Activated CD8-positive, alpha-beta memory T cell treated with anti-CD3 and anti-CD28 coated beads, Interleukin-2, amount 10 ng/mL, durations not matched to agents 7 days and 5 days (primary cell): ENCODE measurements at regions of chr5 and their contacts with region 1.

Region 1: DNA sequence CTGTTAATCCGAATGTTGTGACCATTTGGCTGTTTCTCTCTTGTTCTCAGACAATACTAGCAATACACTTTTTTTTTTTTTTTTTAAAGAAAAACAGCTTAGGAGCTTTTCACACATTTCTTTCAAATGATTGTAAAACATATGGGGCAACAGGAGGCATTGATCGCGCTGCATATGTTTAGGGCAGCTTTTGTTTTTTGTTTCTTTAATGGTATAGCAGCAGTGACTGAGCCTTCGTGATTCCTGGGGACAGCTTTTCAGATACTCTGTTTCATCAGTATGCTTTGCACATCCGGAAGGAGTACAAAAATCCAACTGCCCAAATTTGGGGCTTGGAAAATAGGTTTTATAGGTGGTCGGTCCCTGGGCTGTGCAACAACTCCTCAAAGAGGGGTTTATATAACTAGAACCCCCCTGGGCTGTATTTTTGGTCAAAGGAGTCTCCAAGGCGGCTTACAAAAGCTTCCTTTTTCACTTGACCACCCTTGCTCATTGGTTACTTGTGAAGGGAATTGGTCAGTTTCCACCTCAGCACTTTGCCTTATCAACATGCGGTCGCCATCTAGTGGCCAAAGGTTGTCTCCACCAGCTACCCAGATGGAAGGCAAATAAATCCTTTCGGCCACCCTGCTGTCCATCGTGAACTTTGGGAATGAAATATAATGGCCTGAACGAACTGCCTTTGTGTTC is 91.8 kb downstream of the PDE6A start:
- DNase-seq: peak; percentile 58
- ATAC-seq: peak; percentile 61
- H3K4me3 Mint-ChIP-seq: no peak overlapping the region
- H3K27ac Mint-ChIP-seq: no peak overlapping the region
- H3K4me1 Mint-ChIP-seq: no peaks in the 10 kb centered on the region
- H3K27me3 Mint-ChIP-seq: no peaks in the 10 kb centered on the region

Region 2: GRCh38 chr5:149636851-149637246 is 215.9 kb before region 1 on chr5:
- CTCF ChIA-PET with region 1: interaction called, 13 read pairs
- DNase-seq: peak; percentile 73
- ATAC-seq: peak; percentile 66
- H3K4me3 Mint-ChIP-seq: no peak overlapping the region
- H3K27ac Mint-ChIP-seq: no peak overlapping the region
- H3K4me1 Mint-ChIP-seq: peaks cover 13% of the 10 kb centered on the region
- H3K27me3 Mint-ChIP-seq: no peaks in the 10 kb centered on the region

Region 3: GRCh38 chr5:149828161-149828884 is 24.5 kb before region 1 on chr5:
- CTCF ChIA-PET with region 1: interaction called, 159 read pairs
- DNase-seq: peak; percentile 87
- ATAC-seq: peak; percentile 80
- H3K4me3 Mint-ChIP-seq: no peak overlapping the region
- H3K27ac Mint-ChIP-seq: no peak overlapping the region
- H3K4me1 Mint-ChIP-seq: peaks cover 8% of the 10 kb centered on the region
- H3K27me3 Mint-ChIP-seq: no peaks in the 10 kb centered on the region

Region 4: DNA sequence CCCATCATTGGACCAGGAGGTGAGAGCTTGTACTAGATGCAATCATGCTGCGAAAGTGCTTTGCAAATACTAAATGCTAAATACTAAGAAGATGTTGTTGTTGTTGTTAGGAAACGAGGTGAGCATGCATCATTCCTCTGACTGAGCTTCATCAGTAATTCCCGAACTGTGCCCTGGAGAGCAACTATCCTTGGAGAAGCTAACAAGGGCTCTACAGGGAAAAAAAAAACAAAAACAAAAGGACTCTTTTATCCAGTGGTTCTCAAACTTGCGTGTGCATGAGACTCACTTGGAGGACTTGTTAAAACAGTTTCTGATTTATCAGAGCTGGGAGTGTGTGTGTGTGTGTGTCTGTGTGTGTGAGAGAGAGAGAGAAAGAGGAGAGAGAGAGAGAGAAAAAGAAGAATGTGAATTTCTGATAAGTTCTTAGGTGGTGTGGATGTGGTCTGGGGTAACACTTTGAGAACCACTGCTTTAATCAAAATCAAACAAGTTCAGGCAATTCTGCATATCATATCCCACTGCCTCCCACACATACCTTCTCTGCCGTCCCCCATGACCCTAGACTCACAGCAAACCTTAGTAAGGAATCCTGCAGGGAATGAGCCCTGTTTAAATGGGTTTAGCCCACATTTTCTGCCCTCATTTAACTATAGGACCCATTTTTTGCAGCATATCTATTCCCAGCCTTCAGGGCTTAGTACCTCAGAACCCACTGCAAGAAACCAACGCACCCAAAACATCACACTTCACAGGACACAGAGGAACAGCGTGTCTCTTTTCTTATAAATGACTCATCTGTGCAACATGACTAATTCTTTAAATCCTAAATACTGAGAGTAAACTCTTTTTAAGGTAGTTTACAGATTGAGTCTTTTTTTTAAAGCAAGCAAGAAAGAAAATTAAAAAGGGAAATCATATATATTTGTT is 42.9 kb after region 1 on chr5:
- CTCF ChIA-PET with region 1: interaction called, 10 read pairs
- DNase-seq: peak; percentile 67
- ATAC-seq: peak; percentile 86
- H3K4me3 Mint-ChIP-seq: no peak overlapping the region
- H3K27ac Mint-ChIP-seq: peak overlapping the region; percentile 54
- H3K4me1 Mint-ChIP-seq: peaks cover 24% of the 10 kb centered on the region
- H3K27me3 Mint-ChIP-seq: peaks cover 30% of the 10 kb centered on the region

Region 5: GRCh38 chr5:149990518-149991376 is 138.0 kb after region 1 on chr5:
- CTCF ChIA-PET with region 1: interaction called, 19 read pairs
- DNase-seq: peak; percentile 80
- ATAC-seq: peak; percentile 86
- H3K4me3 Mint-ChIP-seq: no peak overlapping the region
- H3K27ac Mint-ChIP-seq: no peak overlapping the region
- H3K4me1 Mint-ChIP-seq: peaks cover 3% of the 10 kb centered on the region
- H3K27me3 Mint-ChIP-seq: no peaks in the 10 kb centered on the region